ENCODE measurements at regions of chr17 and their contacts with region 1.

Region 1: DNA sequence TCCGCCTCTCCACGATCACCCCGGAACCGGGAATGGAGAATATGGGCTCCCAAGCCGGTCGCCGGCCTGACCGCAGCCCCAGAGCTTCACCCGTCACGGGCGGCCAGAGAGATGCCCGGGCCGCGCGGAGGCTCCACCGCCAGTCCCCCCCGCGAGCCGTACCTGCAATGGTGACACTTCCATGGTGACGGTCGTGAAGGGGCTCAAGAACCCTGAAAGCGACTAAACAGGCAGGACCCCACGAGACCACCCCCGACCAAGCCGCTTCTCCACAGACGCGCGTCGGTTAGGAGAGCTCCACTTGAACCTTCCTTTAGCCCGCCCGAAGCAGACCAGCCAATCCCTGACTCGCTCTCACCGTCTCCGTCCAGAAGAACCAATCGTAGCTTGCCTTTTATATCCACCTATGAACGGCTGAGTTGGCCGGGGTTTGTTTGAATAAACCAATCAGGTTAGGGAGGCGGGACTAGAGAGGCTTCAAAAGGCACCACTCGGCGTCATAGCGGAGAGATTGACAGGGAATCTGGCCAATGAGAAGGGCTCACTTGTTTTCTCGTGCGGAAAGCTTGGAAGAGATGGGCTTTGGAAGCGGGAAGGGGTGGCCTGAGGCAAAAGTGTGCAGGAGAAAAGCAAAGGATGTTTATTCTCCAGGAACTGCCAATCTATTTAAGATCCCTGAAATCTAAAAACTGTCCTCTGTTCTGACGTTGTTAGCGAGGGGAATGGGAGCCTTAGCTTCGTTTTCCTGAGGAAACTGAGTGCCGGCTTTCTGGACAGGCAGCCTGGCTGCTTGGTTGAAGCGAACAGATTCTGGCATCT is at the start of gene TOP2A:
- DNase-seq: peak; percentile 100
- H3K4me3 Mint-ChIP-seq: peak within 1 kb of the TSS; percentile 96
- H3K27ac Mint-ChIP-seq: peak within 1 kb of the TSS; percentile 94
- H3K4me1 Mint-ChIP-seq: peaks cover 42% of the 10 kb centered on the region
- H3K27me3 Mint-ChIP-seq: no peaks in the 10 kb centered on the region
- CTCF ChIP-seq: no peak
- total RNA-seq, gene TOP2A: 1,389 and 1,672 TPM in 2 replicates

Region 2: GRCh38 chr17:39769974-39770587 is 647.7 kb before region 1 on chr17:
- CTCF ChIA-PET with region 1: interaction called, 25 read pairs
- intact Hi-C with region 1: no loop called
- DNase-seq: peak; percentile 100
- H3K4me3 Mint-ChIP-seq: peak overlapping the region; percentile 10
- H3K27ac Mint-ChIP-seq: peak overlapping the region; percentile 60
- H3K4me1 Mint-ChIP-seq: peaks cover 72% of the 10 kb centered on the region
- H3K27me3 Mint-ChIP-seq: peaks cover 13% of the 10 kb centered on the region
- CTCF ChIP-seq: no peak

Region 3: GRCh38 chr17:39946551-39947330 is 471.1 kb before region 1 on chr17:
- CTCF ChIA-PET with region 1: interaction called, 25 read pairs
- intact Hi-C with region 1: no loop called
- DNase-seq: peak; percentile 86
- H3K4me3 Mint-ChIP-seq: no peak overlapping the region
- H3K27ac Mint-ChIP-seq: no peak overlapping the region
- H3K4me1 Mint-ChIP-seq: peaks cover 39% of the 10 kb centered on the region
- H3K27me3 Mint-ChIP-seq: peaks cover 57% of the 10 kb centered on the region
- CTCF ChIP-seq: no peak

Region 4: DNA sequence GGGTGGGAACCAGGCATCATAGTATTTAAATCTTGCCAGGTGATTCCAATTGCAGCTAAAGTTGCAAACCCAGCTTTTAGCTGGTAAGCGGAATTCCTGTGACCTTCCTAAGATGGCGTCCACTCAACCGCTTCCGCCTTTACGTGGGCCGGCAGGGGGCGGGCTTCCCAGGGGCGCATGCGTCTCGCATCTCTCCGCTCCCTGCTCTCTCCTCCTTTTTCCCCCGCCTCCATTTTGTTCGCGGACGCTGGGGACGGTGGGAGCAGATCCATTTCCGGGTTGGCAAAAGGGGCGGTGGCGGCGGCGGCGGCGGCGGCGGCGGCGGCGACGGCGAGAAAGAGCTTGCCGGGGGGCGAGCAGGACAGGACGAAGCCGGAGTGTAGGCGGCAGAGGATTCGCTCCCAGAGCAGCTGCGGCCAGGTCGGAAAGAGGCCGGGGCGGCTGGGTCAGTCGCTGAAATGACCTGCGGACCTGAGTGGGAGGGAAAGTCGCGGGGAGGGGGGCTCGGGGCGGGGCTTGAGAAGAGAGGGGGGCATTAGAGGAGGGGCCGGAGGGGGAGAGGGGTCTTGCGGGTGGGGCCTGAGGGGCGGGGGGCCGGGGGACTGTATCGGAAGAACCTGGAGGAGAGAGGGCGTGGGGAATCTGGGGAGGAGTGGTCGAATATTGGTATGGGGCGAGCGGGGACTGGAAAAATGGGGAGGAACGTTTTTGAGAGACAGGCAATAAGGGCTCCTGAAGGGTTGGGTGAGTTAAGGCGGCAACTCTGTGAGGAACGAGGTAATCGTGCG is 198.6 kb before region 1 on chr17 and contains the start of gene WIPF2:
- CTCF ChIA-PET with region 1: interaction called, 30 read pairs
- intact Hi-C with region 1: no loop called
- DNase-seq: peak; percentile 100
- H3K4me3 Mint-ChIP-seq: peak within 1 kb of the TSS; percentile 78
- H3K27ac Mint-ChIP-seq: peak within 1 kb of the TSS; percentile 36
- H3K4me1 Mint-ChIP-seq: peaks cover 31% of the 10 kb centered on the region
- H3K27me3 Mint-ChIP-seq: no peaks in the 10 kb centered on the region
- CTCF ChIP-seq: no peak
- total RNA-seq, gene WIPF2: 327 and 376 TPM in 2 replicates

Region 5: DNA sequence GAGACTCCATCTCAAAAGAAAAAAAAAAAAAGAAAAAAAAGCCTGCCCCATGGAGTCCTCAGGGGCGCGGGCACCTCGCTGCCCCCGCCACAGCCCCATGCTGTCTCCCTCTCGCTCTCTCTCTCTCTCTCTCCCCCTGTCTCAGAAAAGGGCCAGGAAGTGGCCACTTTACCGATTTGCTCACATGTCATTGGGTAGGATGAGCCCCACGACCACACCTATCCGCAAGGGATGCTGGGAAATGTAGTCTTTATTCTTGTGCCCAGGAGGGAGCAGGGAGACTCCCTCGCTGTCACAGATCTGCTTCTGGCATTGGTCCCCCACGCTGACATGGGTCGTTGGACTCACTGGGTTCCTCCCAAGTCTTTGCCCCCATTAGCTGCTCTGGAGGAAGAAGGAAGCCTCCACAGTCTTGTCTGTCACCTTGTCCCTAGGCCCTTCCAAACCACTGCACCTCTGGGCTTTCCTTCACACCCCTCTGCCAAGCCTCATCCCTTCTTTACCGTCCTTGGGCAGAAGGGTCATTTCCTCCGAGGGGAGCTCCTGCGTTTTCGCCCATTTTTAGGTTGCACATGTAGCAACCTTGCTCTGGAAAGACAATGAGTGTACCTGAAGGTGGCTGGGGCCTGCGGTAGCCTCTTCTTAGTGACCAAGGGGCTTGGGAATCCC is 46.4 kb before region 1 on chr17:
- CTCF ChIA-PET with region 1: interaction called, 129 read pairs
- intact Hi-C with region 1: no loop called
- DNase-seq: no peak
- H3K4me3 Mint-ChIP-seq: no peak overlapping the region
- H3K27ac Mint-ChIP-seq: no peak overlapping the region
- H3K4me1 Mint-ChIP-seq: peaks cover 25% of the 10 kb centered on the region
- H3K27me3 Mint-ChIP-seq: no peaks in the 10 kb centered on the region
- CTCF ChIP-seq: no peak

Region 6: GRCh38 chr17:40474419-40475002 is 56.7 kb after region 1 on chr17:
- CTCF ChIA-PET with region 1: interaction called, 227 read pairs
- intact Hi-C with region 1: loop called (anchors 1 kb)
- DNase-seq: no peak
- H3K4me3 Mint-ChIP-seq: no peak overlapping the region
- H3K27ac Mint-ChIP-seq: no peak overlapping the region
- H3K4me1 Mint-ChIP-seq: no peaks in the 10 kb centered on the region
- H3K27me3 Mint-ChIP-seq: peaks cover 65% of the 10 kb centered on the region
- CTCF ChIP-seq: no peak

Region 7: DNA sequence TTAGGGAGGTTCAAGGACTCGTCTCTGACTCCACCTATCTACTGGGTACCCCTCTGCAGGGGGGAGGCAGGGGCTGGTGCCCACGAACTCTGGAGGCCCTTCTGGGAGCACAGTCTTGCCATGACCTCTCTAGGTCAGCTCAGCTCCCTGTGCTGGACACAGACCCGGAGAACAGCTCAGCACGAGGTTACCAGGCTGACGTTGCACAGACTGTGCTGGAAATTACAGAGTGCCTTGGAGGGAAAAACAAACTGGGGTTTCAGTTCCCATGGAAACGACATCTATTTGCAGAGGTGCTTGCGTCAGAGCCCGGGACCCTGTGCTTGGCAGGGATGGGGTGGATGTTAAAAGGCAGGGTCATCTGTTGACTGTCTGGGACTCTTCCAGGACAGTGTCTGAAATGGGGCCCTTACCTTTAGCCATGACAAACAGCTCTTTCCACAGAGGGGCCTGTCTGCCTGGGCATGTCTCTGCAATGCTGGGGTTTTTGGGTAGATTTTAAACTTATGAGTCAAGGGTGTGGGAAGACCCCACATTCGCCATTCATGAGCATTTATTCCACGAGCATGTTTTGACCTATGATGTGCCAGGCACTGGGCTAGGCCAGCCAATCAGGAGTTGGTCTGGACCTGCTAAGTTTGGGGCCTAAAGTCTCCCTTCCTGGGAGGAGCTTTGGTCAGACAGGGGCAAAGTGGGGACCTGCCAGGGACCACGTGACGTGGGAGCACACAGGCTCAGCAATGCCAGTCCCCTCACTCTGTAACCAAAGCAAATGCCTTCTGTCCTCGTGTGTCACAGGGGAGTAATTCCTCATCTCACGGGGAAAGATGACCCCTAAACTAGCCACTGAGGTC is 125.0 kb after region 1 on chr17:
- CTCF ChIA-PET with region 1: interaction called, 498 read pairs
- intact Hi-C with region 1: no loop called
- DNase-seq: no peak
- H3K4me3 Mint-ChIP-seq: no peak overlapping the region
- H3K27ac Mint-ChIP-seq: no peak overlapping the region
- H3K4me1 Mint-ChIP-seq: no peaks in the 10 kb centered on the region
- H3K27me3 Mint-ChIP-seq: peaks cover 50% of the 10 kb centered on the region
- CTCF ChIP-seq: no peak